PC-9 (cell line): ENCODE measurements at regions of chr2 and their contacts with region 1.

Region 1: GRCh38 chr2:166239548-166239947 is 111.7 kb upstream of the SCN1A start:
- DNase-seq: peak; percentile 58 to 66
- H3K4me3 ChIP-seq: no peak overlapping the region
- H3K27ac ChIP-seq: peak overlapping the region; percentile 67
- H3K4me1 ChIP-seq: peaks cover 9% of the 10 kb centered on the region; the same call in 1 of the 2 replicates
- H3K27me3 ChIP-seq: no peaks in the 10 kb centered on the region
- CTCF ChIP-seq: no peak

Region 2: DNA sequence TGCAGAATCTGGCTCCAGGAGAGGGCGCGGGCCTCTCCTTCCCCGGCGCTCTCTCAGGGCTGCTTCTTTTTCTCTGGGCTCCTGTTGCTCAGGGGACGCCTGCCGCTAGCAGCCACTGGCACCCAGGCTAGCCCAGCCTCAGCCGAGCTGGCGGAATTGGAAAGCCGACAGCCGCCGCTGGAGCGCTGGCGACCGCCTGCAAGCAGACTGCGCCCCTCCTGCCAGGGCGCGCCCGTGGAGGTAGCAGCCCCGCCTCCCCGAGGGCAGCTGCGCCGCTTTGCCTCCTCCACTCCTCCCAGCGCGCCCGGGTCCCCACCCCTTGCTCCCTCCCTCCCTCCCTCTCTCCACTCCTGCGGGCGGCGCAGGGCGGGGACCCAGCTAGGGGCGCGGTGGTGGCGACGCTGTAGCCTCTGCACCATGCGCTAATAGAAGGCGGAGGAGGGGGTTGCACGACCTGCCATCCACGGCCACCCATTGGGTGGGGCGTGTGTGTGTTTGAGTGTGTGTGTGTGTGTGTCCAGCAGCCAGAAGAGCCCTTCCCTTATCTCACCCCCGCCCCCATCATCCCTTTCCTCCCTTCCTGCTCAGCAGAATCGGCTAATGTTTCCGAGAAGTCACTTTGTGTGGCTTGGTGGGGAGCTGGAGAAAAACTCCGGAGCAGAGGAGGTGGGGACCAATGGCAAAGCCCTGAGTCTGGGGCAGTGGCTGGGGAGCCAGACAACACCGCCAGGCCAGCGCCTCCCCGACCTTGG is 136.4 kb after region 1 on chr2 and contains the start of gene SCN9A:
- CTCF ChIA-PET with region 1: no interaction called
- POLR2A ChIA-PET with region 1: no interaction called
- intact Hi-C with region 1: loop called (anchors 5 kb)
- DNase-seq: peak in 1 of 2 experiments; percentile 70
- H3K4me3 ChIP-seq: peak within 1 kb of the TSS; percentile 55
- H3K27ac ChIP-seq: no peak within 1 kb of the TSS
- H3K4me1 ChIP-seq: 0 out of 2 replicates have a peak, but pooled peaks cover 8% of the 10 kb centered on the region
- H3K27me3 ChIP-seq: no peaks in the 10 kb centered on the region
- CTCF ChIP-seq: no peak
- total RNA-seq, gene SCN9A: 3.4 and 5.2 TPM in 2 replicates

Region 3: GRCh38 chr2:168210895-168211570 is 1971.5 kb after region 1 on chr2:
- CTCF ChIA-PET with region 1: no interaction called
- POLR2A ChIA-PET with region 1: no interaction called
- intact Hi-C with region 1: loop called (anchors 10 kb)
- DNase-seq: peak; percentile 23 to 98
- H3K4me3 ChIP-seq: peak overlapping the region; percentile 27; the same call in 1 of the 2 replicates
- H3K27ac ChIP-seq: peak overlapping the region; percentile 99
- H3K4me1 ChIP-seq: peaks cover 54% of the 10 kb centered on the region
- H3K27me3 ChIP-seq: no peaks in the 10 kb centered on the region
- CTCF ChIP-seq: no peak